Mammary epithelial cell (primary cell): ENCODE measurements at regions of chr6 and their contacts with region 1.

Region 1: GRCh38 chr6:160088069-160088783 is 33.4 kb upstream of the SLC22A1 start:
- DNase-seq: peak; percentile 43
- H3K4me3 ChIP-seq: no peak overlapping the region
- H3K27ac ChIP-seq: no peak overlapping the region
- H3K4me1 ChIP-seq: no peaks in the 10 kb centered on the region
- H3K27me3 ChIP-seq: no peaks in the 10 kb centered on the region
- CTCF ChIP-seq: peak; percentile 74 to 81

Region 2: DNA sequence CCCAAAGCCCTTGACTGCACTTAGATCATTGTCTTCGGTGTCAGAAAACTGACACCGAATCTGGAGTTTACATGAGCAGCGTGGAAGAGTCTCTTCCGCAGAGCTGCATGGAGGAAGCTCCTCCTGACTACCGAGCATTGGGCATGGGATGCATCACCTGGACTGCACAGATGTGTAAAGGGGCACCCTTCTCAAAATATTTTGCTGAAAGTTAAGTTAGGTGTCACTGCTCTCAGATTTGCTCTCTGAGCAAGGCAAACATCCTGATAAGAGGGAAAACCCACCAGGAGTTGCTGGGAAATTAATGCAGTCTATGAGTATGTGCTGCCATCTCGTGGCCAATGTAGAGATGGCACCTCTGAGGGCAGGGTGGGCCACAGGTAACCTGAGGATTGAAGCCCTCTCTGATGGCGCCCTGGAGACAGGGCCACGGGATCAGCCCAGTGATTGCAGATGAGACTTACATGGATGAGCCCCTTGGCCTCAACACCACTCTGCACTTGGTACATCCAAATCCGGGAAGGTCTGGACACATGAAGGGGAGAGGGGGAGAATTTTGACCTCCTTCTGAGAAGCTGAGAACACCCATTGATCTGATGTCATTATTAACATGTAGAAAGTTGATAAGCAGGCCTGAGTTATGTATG is 445.9 kb after region 1 on chr6:
- CTCF ChIA-PET with region 1: no interaction called
- dilution Hi-C with region 1: no loop called
- in situ Hi-C with region 1: no loop called
- intact Hi-C with region 1: loop called (anchors 5 kb)
- DNase-seq: peak; percentile 25
- H3K4me3 ChIP-seq: no peak overlapping the region
- H3K27ac ChIP-seq: no peak overlapping the region
- H3K4me1 ChIP-seq: no peaks in the 10 kb centered on the region
- H3K27me3 ChIP-seq: no peaks in the 10 kb centered on the region
- CTCF ChIP-seq: peak; percentile 92 to 93

Region 3: DNA sequence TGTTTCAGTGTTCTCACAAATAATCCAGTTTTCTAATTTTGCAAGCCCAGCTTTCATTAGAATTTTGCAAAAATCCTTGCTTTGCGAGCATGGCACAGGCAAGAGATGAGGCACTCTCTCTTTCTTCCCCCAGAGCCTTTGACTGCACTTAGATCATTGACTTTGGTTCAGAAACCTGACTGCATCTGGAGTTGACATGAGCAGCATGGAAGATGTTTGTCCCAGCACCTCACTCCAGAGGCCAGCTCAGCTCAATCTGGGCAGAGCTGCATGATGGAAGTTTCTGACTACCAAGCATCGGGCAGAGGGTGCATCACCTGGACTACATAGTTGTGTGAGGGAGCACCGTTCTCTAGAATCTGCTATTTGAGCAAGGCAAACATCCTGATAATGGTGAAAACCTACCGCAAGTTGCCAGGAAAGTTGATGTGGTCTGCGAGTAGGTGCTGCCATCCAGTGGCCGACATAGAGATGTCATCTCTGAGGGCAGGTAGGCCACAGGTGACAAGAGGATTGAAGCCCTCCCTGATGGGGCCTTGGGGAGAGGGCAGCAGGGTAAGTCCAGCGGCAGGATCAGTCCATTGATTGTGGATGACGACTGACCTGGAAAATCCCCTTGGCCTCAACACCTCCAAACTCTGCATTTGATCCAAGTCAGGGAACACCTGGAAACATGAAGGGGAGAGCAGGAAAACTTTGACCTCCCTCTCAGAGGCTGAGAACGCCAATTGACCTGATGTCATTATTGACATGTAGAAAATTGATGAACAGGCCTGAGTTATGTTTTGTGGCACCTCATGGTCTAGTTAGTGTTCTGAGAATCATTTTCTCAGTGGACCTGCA is 579.6 kb after region 1 on chr6:
- CTCF ChIA-PET with region 1: no interaction called
- dilution Hi-C with region 1: no loop called
- in situ Hi-C with region 1: no loop called
- intact Hi-C with region 1: loop called (anchors 1 kb)
- DNase-seq: peak; percentile 12
- H3K4me3 ChIP-seq: no peak overlapping the region
- H3K27ac ChIP-seq: no peak overlapping the region
- H3K4me1 ChIP-seq: no peaks in the 10 kb centered on the region
- H3K27me3 ChIP-seq: no peaks in the 10 kb centered on the region
- CTCF ChIP-seq: peak; percentile 77